HCT116 (cell line): ENCODE measurements at regions of chr1 and their contacts with region 1.

Region 1: DNA sequence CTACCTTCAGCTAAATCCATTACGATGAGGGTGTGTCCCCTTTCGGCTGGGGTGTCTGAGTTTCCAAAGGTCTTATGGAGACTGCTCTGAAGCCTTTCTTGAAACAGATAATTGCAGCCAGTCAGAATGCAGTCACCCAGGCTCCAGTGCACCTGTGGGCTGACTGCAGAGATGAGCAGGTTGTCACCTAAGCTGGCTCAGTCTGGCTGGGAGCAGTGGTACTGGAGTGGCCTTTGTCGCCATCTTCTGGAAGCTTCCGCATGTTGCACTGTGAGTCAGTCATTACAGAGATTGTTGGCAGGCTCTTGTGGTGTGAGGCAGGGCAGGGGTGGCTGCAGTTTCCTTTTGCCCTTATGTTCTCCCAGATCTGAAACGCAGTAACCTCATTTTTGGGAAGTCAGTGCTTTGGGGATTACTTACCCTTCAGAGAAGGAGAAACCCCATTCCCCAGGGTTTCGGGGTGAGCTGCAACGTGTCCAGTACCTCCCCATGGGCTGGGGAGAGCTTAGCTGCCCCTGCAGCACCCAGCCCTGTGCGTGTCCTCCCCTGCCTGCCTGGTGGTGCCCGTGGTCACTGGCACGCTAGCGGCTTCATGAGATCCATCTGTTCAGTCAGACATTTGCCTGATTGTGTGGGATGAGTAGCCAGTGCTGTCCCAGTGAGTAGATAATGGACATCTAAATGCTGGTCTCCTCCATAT is 48.0 kb downstream of the SMYD2 start:
- DNase-seq: peak; percentile 54
- ATAC-seq: peak; percentile 85
- H3K4me3 ChIP-seq: no peak overlapping the region
- H3K27ac ChIP-seq: no peak overlapping the region
- H3K4me1 ChIP-seq: no peaks in the 10 kb centered on the region
- H3K27me3 ChIP-seq: no peaks in the 10 kb centered on the region
- CTCF ChIP-seq: peak; percentile 84 to 91 (median 87)
- POLR2A ChIP-seq: no peak
- RAD21 ChIP-seq: peak; percentile 97

Region 2: GRCh38 chr1:213122514-213122929 is 1206.4 kb before region 1 on chr1:
- CTCF ChIA-PET with region 1: interaction called, 3 read pairs
- POLR2A ChIA-PET with region 1: no interaction called
- RAD21 ChIA-PET with region 1: no interaction called
- intact Hi-C with region 1: loop called (anchors 5 kb)
- DNase-seq: peak; percentile 55
- ATAC-seq: no peak
- H3K4me3 ChIP-seq: no peak overlapping the region
- H3K27ac ChIP-seq: peak overlapping the region; percentile 70; the same call in 1 of the 2 replicates
- H3K4me1 ChIP-seq: peaks cover 66 to 69% of the 10 kb centered on the region in 2 experiments
- H3K27me3 ChIP-seq: no peaks in the 10 kb centered on the region
- CTCF ChIP-seq: peak; percentile 36 to 48 (median 36); a peak in 3 of 6 replicates
- POLR2A ChIP-seq: no peak
- RAD21 ChIP-seq: peak; percentile 71

Region 3: DNA sequence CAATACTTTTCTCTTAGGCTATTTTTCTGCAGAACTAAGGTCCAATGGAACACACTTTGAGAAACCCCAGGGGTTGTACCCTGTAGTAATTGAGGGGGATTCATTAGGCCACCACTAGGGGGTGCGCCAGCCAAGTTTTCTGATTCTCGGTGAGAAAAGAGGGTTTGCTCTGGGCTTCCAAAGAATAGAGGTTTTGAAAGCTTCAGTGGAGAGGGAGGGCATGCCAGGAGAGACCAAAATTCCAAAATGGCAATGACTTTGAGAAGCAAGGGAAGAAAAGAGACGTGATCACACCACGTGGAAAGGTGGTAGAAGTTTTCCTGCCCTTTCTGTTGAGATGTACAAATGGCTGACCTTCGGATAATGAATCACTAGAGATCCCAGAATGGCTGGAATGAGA is 954.6 kb before region 1 on chr1:
- CTCF ChIA-PET with region 1: no interaction called
- POLR2A ChIA-PET with region 1: no interaction called
- RAD21 ChIA-PET with region 1: no interaction called
- intact Hi-C with region 1: loop called (anchors 5 kb)
- DNase-seq: peak; percentile 40
- ATAC-seq: peak; percentile 88
- H3K4me3 ChIP-seq: no peak overlapping the region
- H3K27ac ChIP-seq: no peak overlapping the region
- H3K4me1 ChIP-seq: no peaks in the 10 kb centered on the region
- H3K27me3 ChIP-seq: no peaks in the 10 kb centered on the region
- CTCF ChIP-seq: peak; percentile 62 to 98 (median 94); a peak in 5 of 6 replicates
- POLR2A ChIP-seq: no peak
- RAD21 ChIP-seq: peak; percentile 83

Region 4: DNA sequence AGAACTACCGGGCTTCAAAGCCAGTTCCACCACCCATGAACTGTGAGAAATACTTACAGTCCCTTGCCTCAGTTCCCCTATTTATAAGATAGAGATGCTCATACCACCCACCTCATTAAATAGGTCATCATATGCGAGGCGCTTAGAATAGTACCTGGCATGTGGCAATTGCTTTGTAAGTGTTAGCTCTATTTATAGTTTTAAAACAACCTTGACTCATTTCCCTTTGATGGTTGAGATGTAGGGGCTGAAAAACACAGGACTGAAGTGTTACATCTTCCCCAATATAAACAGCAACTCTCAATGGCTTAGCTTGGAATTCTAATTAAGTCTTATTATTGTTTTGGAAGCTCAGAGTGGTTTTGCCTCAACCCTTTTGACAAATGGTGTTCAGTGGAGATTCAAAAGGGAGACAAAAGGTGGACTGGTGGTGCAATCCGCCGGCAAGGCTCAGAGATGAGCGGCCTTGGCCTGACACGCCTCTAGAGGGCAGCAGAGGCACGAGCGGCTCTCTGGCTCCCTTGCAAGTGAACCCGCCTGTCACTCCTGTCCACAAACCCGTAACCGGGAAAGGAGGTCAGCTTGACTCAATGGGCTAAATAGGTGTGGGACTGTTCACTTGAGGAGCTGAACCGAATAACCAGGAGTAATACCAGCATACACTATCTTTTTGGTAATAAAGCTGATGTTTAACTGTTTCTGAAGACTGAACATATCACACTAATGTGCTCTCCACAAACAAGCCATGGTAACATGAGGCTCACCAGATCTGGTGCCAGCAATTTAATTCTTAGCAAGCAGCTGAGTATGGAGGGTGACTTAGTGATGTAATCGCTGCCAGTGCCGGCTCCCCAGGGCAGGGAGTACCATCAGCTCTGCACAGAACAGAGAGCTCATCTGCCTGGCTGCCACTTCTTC is 67.5 kb before region 1 on chr1:
- CTCF ChIA-PET with region 1: interaction called, 41 read pairs
- POLR2A ChIA-PET with region 1: interaction called, 3 read pairs
- RAD21 ChIA-PET with region 1: interaction called, 7 to 8 read pairs
- intact Hi-C with region 1: loop called (anchors 1 kb)
- DNase-seq: peak; percentile 64
- ATAC-seq: peak; percentile 99
- H3K4me3 ChIP-seq: no peak overlapping the region
- H3K27ac ChIP-seq: no peak overlapping the region
- H3K4me1 ChIP-seq: peaks cover 0 to 10% of the 10 kb centered on the region in 2 experiments; a peak in 1 of 4 replicates
- H3K27me3 ChIP-seq: no peaks in the 10 kb centered on the region
- CTCF ChIP-seq: peak; percentile 78 to 96 (median 94)
- POLR2A ChIP-seq: no peak
- RAD21 ChIP-seq: peak; percentile 89

Region 5: GRCh38 chr1:214349781-214350180 is 20.9 kb after region 1 on chr1:
- CTCF ChIA-PET with region 1: interaction called, 14 read pairs
- POLR2A ChIA-PET with region 1: no interaction called
- RAD21 ChIA-PET with region 1: no interaction called
- intact Hi-C with region 1: no loop called
- DNase-seq: no peak
- ATAC-seq: no peak
- H3K4me3 ChIP-seq: no peak overlapping the region
- H3K27ac ChIP-seq: no peak overlapping the region
- H3K4me1 ChIP-seq: no peaks in the 10 kb centered on the region
- H3K27me3 ChIP-seq: no peaks in the 10 kb centered on the region
- CTCF ChIP-seq: no peak
- POLR2A ChIP-seq: no peak
- RAD21 ChIP-seq: no peak

Region 6: GRCh38 chr1:214584805-214585766 is 256.2 kb after region 1 on chr1:
- CTCF ChIA-PET with region 1: interaction called, 130 read pairs
- POLR2A ChIA-PET with region 1: no interaction called
- RAD21 ChIA-PET with region 1: interaction called, 10 to 15 read pairs
- intact Hi-C with region 1: loop called (anchors 1 kb)
- DNase-seq: peak; percentile 40
- ATAC-seq: peak; percentile 76
- H3K4me3 ChIP-seq: no peak overlapping the region
- H3K27ac ChIP-seq: no peak overlapping the region
- H3K4me1 ChIP-seq: peaks cover 12 to 22% of the 10 kb centered on the region in 2 experiments
- H3K27me3 ChIP-seq: no peaks in the 10 kb centered on the region
- CTCF ChIP-seq: peak; percentile 57 to 95 (median 83)
- POLR2A ChIP-seq: no peak
- RAD21 ChIP-seq: peak; percentile 95

Region 7: GRCh38 chr1:215526553-215527151 is 1197.7 kb after region 1 on chr1:
- CTCF ChIA-PET with region 1: interaction called, 23 read pairs
- POLR2A ChIA-PET with region 1: no interaction called
- RAD21 ChIA-PET with region 1: no interaction called
- intact Hi-C with region 1: loop called (anchors 2 kb)
- DNase-seq: peak; percentile 43
- ATAC-seq: peak; percentile 70
- H3K4me3 ChIP-seq: no peak overlapping the region
- H3K27ac ChIP-seq: no peak overlapping the region
- H3K4me1 ChIP-seq: no peaks in the 10 kb centered on the region
- H3K27me3 ChIP-seq: no peaks in the 10 kb centered on the region
- CTCF ChIP-seq: peak; percentile 32 to 63 (median 55); a peak in 4 of 6 replicates
- POLR2A ChIP-seq: no peak
- RAD21 ChIP-seq: peak; percentile 86